Activated CD4-positive, alpha-beta memory T cell treated with anti-CD3 and anti-CD28 coated beads, Interleukin-2, amount 10 ng/mL, durations not matched to agents 7 days and 5 days (primary cell): ENCODE measurements at regions of chr14 and their contacts with region 1.

Region 1: DNA sequence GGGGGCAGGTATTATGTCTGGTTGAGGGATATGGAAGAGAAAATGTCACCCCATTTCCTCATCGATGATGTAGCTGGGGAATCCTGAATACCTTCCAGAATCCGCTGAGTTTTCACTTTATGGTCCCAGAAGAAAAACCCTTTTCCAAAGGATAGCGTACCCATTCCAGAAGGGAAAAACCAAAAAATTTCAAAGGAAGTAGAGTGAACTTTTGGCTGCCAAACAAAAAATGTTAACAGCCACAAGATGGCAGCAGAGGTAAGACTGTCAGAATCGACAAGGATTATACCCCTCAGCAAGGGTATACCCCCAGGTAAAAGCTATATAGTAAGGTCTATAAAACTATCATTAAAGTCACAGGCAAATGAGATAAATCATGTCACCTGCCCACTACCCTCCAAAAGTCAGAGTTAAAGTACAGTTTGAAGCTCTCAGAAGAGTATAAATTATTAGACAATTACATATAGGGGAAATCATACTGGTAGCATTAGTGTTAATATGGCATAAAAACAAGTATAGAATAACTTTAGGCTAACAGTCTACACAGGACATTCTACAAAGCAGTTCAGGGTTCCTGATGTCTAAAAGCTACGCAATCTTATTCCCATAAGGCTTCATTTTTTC is 18.0 kb downstream of the ACIN1 start:
- DNase-seq: no peak
- H3K4me3 Mint-ChIP-seq: no peak overlapping the region
- H3K27ac Mint-ChIP-seq: no peak overlapping the region
- H3K4me1 Mint-ChIP-seq: peaks cover 8% of the 10 kb centered on the region
- H3K27me3 Mint-ChIP-seq: no peaks in the 10 kb centered on the region

Region 2: GRCh38 chr14:23095196-23096108 is 18.6 kb after region 1 on chr14 and contains the start of gene C14orf119:
- CTCF ChIA-PET with region 1: interaction called, 39 read pairs
- POLR2A ChIA-PET with region 1: interaction called, 37 read pairs
- DNase-seq: peak; percentile 100
- H3K4me3 Mint-ChIP-seq: no peak within 1 kb of the TSS
- H3K27ac Mint-ChIP-seq: no peak within 1 kb of the TSS
- H3K4me1 Mint-ChIP-seq: peaks cover 36% of the 10 kb centered on the region
- H3K27me3 Mint-ChIP-seq: no peaks in the 10 kb centered on the region
- total RNA-seq, gene C14orf119: 49.2 to 55.5 TPM

Region 3: GRCh38 chr14:23113431-23114119 is 36.7 kb after region 1 on chr14:
- CTCF ChIA-PET with region 1: interaction called, 10 read pairs
- POLR2A ChIA-PET with region 1: no interaction called
- DNase-seq: no peak
- H3K4me3 Mint-ChIP-seq: no peak overlapping the region
- H3K27ac Mint-ChIP-seq: no peak overlapping the region
- H3K4me1 Mint-ChIP-seq: peaks cover 14% of the 10 kb centered on the region
- H3K27me3 Mint-ChIP-seq: peaks cover 4% of the 10 kb centered on the region

Region 4: DNA sequence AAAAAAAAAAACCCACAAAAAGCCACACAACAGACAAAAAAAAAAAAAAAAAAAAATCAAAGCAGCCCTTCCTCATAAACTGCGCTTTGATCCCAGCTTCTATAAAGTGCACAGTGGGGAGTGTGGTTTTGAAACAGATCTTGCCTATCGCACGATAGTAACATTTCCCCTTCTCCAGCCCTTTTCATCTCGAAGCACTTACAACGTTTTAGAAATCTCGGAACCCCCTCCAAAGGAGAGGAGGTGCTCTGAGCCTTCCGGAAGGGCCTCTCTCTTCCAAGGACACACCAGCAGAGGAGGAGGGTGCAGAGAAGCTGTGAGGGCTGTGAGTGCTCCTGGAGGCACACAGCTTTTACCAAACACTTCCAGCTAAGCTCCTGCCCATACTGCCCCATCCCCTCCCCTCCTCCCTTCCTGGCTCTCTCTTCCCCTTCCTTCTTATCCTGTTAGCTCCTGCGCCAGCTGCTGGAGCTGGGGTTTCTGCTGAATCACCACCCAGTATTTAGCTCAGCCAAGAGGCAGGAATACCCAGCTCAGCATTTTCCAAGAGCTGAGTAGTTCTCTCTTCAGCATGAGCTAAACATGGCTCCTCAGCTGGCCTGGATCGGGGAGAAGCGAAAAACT is 78.2 kb after region 1 on chr14:
- CTCF ChIA-PET with region 1: no interaction called
- POLR2A ChIA-PET with region 1: no interaction called
- DNase-seq: no peak
- H3K4me3 Mint-ChIP-seq: no peak overlapping the region
- H3K27ac Mint-ChIP-seq: no peak overlapping the region
- H3K4me1 Mint-ChIP-seq: peaks cover 3% of the 10 kb centered on the region
- H3K27me3 Mint-ChIP-seq: peaks cover 11% of the 10 kb centered on the region